ENCODE measurements at regions of chr10 and their contacts with region 1.

Region 1: DNA sequence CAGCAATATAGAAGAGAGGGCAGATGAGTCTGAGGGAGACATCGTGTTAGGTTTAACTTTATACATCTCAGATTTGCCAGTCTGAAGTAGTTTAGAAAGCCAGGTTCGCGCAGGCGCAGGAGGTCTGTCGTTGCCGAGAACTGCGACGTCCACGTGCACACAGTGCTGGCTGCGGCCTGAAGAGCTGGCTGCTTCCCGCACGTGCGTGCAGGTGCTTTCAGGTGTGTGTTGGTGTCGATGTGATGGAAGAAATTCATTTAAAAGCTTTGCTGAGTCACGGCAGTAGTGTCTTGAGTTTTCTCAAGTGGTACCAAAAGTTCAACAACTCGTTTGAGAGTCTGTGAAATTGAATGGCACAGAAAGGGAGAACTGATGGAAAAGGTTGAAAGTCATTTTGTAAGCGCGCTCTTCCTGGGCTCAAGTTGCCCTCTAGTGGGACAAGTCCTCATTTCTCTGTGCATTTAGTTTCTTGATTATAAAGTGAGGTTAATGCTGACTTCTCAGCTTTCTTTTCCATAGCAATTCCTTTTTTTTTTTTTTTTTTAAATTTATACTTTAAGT is 18.6 kb downstream of the WDR37 start:
- DNase-seq: no peak
- H3K4me3 ChIP-seq: no peak overlapping the region
- H3K27ac ChIP-seq: no peak overlapping the region
- H3K4me1 ChIP-seq: no peaks in the 10 kb centered on the region
- H3K27me3 ChIP-seq: no peaks in the 10 kb centered on the region
- CTCF ChIP-seq: no peak
- POLR2A ChIP-seq: no peak

Region 2: DNA sequence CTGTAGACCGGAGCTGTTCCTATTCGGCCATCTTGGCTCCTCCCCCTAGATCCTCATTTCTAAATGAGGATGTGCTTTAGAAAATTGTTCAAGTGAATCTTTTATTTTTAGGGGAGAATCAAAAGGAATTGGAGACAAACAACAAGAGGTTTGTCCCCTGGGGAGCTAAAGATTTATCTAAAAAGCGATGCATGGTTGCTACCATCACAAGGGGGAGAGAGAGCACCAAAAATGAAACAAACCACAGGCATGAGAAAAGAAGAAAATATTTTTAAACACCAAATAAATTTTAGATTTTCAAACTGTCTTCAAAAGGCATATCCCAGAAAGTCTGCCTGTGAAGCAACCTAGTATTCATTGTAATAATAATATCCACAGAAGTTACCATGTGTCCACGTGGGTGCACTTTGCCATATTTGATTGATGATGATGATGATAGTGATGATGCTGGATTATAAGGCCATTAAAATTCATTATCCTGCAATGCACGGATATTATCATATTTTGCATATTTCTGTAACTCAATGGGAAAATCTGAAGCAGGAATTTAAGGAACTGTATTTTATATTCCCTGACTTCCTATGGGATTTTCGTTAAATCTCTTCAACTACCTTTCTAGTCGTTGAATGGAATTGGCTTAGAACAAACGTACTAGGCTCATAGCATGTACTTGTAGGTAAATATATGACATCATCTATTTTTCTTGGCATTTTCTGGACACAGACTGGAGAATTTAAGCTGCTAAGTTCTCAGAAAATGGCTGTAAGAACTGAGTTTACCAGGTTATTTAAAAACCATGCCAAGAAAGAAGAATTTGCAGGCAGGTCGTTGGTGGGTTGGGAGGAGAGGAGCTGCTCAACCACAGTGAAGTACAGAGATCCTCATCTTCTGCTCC is 152.9 kb after region 1 on chr10:
- intact Hi-C with region 1: loop called (anchors 10 kb)
- DNase-seq: no peak
- H3K4me3 ChIP-seq: no peak overlapping the region
- H3K27ac ChIP-seq: no peak overlapping the region
- H3K4me1 ChIP-seq: no peaks in the 10 kb centered on the region
- H3K27me3 ChIP-seq: no peaks in the 10 kb centered on the region
- CTCF ChIP-seq: no peak
- POLR2A ChIP-seq: no peak

Measured in breast epithelium (tissue), 4 donors.